Activated CD8-positive, alpha-beta T cell treated with anti-CD3 and anti-CD28 coated beads, Interleukin-2, amount 10 ng/mL, durations not matched to agents 7 days and 5 days (primary cell): ENCODE measurements at regions of chr6 and their contacts with region 1.

Region 1: DNA sequence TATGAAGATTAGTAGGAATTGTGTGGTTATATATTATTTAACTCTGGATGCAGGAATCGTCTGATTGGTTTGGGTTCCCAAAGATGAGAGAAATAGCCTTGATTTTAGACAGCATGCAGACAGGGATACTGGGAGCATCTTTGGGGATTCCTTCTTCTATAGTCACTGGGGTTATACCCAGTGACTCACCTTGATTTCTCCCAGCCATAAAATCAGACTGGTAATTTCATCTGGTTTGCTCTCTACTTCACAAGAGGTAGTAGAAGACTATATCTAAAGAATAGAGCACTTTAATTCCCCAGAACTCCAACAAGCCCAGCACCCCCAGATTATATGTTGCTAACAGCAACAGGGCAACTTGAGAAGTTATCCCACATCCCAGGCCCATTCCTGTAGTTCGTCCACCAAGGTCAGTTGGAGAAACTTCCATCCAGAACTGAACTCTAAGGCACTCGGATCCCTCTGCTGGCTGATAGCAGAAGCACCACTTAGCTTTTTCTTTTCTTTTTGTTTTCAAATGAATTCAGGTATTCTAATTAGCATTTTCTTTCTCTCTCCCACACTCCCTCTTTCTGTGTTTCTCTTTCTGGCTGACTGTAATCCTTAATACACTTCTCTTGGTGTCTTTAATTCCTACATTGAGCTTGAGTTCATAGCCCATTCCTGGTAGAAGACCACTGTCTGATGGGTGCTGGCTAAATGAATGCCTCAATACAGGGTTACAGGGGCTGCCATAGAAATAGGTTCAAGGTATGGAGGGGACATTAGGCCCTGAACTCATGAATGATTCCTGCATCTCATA is 20.4 kb upstream of the EFHC1 start:
- DNase-seq: peak; percentile 61
- ATAC-seq: peak; percentile 25
- H3K4me3 Mint-ChIP-seq: no peak overlapping the region
- H3K27ac Mint-ChIP-seq: peak overlapping the region; percentile 91
- H3K4me1 Mint-ChIP-seq: peaks cover 60% of the 10 kb centered on the region
- H3K27me3 Mint-ChIP-seq: no peaks in the 10 kb centered on the region

Region 2: GRCh38 chr6:52210227-52210626 is 189.5 kb before region 1 on chr6:
- CTCF ChIA-PET with region 1: no interaction called
- POLR2A ChIA-PET with region 1: no interaction called
- DNase-seq: no peak
- ATAC-seq: no peak
- H3K4me3 Mint-ChIP-seq: no peak overlapping the region
- H3K27ac Mint-ChIP-seq: no peak overlapping the region
- H3K4me1 Mint-ChIP-seq: no peaks in the 10 kb centered on the region
- H3K27me3 Mint-ChIP-seq: peaks cover 45% of the 10 kb centered on the region

Region 3: DNA sequence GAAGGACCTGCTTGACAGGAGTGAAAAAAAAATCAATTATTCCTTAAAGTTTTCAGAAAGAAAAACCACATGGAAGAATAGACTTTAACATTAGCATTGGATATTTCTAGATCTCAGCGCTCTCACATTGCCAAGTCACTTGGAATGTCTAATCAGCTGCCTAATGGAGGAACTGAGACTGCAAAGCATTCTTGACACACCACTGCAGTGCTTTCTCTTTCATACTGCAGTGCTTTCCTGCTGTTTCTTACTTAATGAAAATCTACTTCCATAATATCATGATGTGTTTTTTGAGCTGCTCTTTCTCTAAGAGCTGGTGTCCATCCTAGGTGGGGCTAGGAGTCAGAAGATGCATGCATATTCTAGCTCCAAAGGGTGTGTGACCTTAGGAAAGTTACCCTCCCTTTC is 94.7 kb before region 1 on chr6:
- CTCF ChIA-PET with region 1: interaction called, 22 read pairs
- POLR2A ChIA-PET with region 1: interaction called, 3 read pairs
- DNase-seq: no peak
- ATAC-seq: peak; percentile 37
- H3K4me3 Mint-ChIP-seq: peak overlapping the region; percentile 59
- H3K27ac Mint-ChIP-seq: peak overlapping the region; percentile 83
- H3K4me1 Mint-ChIP-seq: peaks cover 62% of the 10 kb centered on the region
- H3K27me3 Mint-ChIP-seq: no peaks in the 10 kb centered on the region

Region 4: GRCh38 chr6:52337633-52338290 is 62.0 kb before region 1 on chr6:
- CTCF ChIA-PET with region 1: interaction called, 11 read pairs
- POLR2A ChIA-PET with region 1: no interaction called
- DNase-seq: peak; percentile 32
- ATAC-seq: no peak
- H3K4me3 Mint-ChIP-seq: no peak overlapping the region
- H3K27ac Mint-ChIP-seq: peak overlapping the region; percentile 53
- H3K4me1 Mint-ChIP-seq: peaks cover 72% of the 10 kb centered on the region
- H3K27me3 Mint-ChIP-seq: no peaks in the 10 kb centered on the region

Region 5: GRCh38 chr6:52361945-52362442 is 37.7 kb before region 1 on chr6 and contains the start of gene PAQR8:
- CTCF ChIA-PET with region 1: interaction called, 69 read pairs
- POLR2A ChIA-PET with region 1: interaction called, 11 read pairs
- DNase-seq: peak; percentile 82
- ATAC-seq: peak; percentile 93
- H3K4me3 Mint-ChIP-seq: peak within 1 kb of the TSS; percentile 98
- H3K27ac Mint-ChIP-seq: peak within 1 kb of the TSS; percentile 92
- H3K4me1 Mint-ChIP-seq: peaks cover 34% of the 10 kb centered on the region
- H3K27me3 Mint-ChIP-seq: no peaks in the 10 kb centered on the region
- total RNA-seq, gene PAQR8: 23.0 to 25.7 TPM

Region 6: GRCh38 chr6:52377538-52378221 is 22.0 kb before region 1 on chr6:
- CTCF ChIA-PET with region 1: interaction called, 14 read pairs
- POLR2A ChIA-PET with region 1: interaction called, 3 read pairs
- DNase-seq: no peak
- ATAC-seq: peak; percentile 39
- H3K4me3 Mint-ChIP-seq: peak overlapping the region; percentile 30
- H3K27ac Mint-ChIP-seq: peak overlapping the region; percentile 63
- H3K4me1 Mint-ChIP-seq: peaks cover 53% of the 10 kb centered on the region
- H3K27me3 Mint-ChIP-seq: no peaks in the 10 kb centered on the region

Region 7: GRCh38 chr6:52419809-52420670 is 20.3 kb after region 1 on chr6 and contains the start of gene EFHC1:
- CTCF ChIA-PET with region 1: interaction called, 79 read pairs
- POLR2A ChIA-PET with region 1: interaction called, 4 read pairs
- DNase-seq: peak; percentile 99
- ATAC-seq: peak; percentile 93
- H3K4me3 Mint-ChIP-seq: no peak within 1 kb of the TSS
- H3K27ac Mint-ChIP-seq: peak within 1 kb of the TSS; percentile 75
- H3K4me1 Mint-ChIP-seq: peaks cover 27% of the 10 kb centered on the region
- H3K27me3 Mint-ChIP-seq: no peaks in the 10 kb centered on the region
- total RNA-seq, gene EFHC1: 1.4 to 2.5 TPM

Region 8: GRCh38 chr6:52503848-52504781 is 104.4 kb after region 1 on chr6:
- CTCF ChIA-PET with region 1: no interaction called
- POLR2A ChIA-PET with region 1: no interaction called
- DNase-seq: no peak
- ATAC-seq: no peak
- H3K4me3 Mint-ChIP-seq: no peak overlapping the region
- H3K27ac Mint-ChIP-seq: no peak overlapping the region
- H3K4me1 Mint-ChIP-seq: no peaks in the 10 kb centered on the region
- H3K27me3 Mint-ChIP-seq: no peaks in the 10 kb centered on the region

Region 9: GRCh38 chr6:52517502-52518278 is 118.0 kb after region 1 on chr6:
- CTCF ChIA-PET with region 1: no interaction called
- POLR2A ChIA-PET with region 1: no interaction called
- DNase-seq: no peak
- ATAC-seq: no peak
- H3K4me3 Mint-ChIP-seq: no peak overlapping the region
- H3K27ac Mint-ChIP-seq: no peak overlapping the region
- H3K4me1 Mint-ChIP-seq: peaks cover 5% of the 10 kb centered on the region
- H3K27me3 Mint-ChIP-seq: no peaks in the 10 kb centered on the region